Activated CD4-positive, alpha-beta T cell treated with anti-CD3 and anti-CD28 coated beads for 36 hours (primary cell): ENCODE measurements at regions of chr3 and their contacts with region 1.

Region 1: GRCh38 chr3:71444028-71444860 is 139.3 kb downstream of the FOXP1 start:
- DNase-seq: peak; percentile 76
- ATAC-seq: peak; percentile 59
- H3K4me3 Mint-ChIP-seq: peak overlapping the region; percentile 57
- H3K27ac Mint-ChIP-seq: peak overlapping the region; percentile 96
- H3K4me1 Mint-ChIP-seq: peaks cover 97% of the 10 kb centered on the region
- H3K27me3 Mint-ChIP-seq: no peaks in the 10 kb centered on the region

Region 2: DNA sequence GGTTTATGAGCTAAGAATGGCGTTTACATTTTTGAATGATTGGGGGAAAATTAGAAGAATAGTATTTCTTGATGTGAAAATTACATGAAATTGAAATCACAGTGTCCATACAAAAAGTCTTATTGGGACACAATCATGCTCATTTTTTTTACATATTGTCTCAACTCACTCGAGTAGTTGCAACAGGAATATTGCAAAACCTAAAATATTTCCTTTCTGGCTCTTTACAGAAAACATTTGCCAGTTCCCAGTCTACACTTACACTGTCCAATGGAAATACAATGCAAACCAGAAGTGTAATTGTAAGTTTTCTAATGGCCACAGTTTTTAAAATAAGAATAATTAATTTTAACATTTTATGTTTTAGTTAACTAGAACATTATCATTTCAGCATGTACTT is 1306.9 kb before region 1 on chr3:
- CTCF ChIA-PET with region 1: no interaction called
- POLR2A ChIA-PET with region 1: no interaction called
- intact Hi-C with region 1: no loop called
- DNase-seq: no peak
- ATAC-seq: no peak
- H3K4me3 Mint-ChIP-seq: no peak overlapping the region
- H3K27ac Mint-ChIP-seq: no peak overlapping the region
- H3K4me1 Mint-ChIP-seq: no peaks in the 10 kb centered on the region
- H3K27me3 Mint-ChIP-seq: peaks cover 4% of the 10 kb centered on the region

Region 3: DNA sequence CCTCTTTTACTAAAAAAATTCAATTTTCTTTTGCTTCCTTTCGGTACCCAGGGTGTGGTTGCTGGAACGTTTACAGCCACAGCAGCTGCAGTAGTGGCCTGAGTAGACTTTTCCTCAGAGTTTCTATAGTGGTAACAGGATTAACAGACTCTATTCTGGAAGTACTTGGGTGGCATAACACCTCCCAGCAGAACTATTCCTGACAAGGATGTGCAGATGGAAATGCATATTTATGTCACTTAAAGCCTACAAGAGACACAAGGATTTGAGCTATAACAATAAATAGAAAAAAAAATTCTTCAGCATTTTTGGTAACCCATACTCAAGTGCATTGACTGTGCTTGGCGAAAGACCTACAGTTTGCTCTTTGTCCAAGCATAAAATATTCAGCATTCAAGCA is 1225.8 kb before region 1 on chr3:
- CTCF ChIA-PET with region 1: no interaction called
- POLR2A ChIA-PET with region 1: no interaction called
- intact Hi-C with region 1: no loop called
- DNase-seq: no peak
- ATAC-seq: no peak
- H3K4me3 Mint-ChIP-seq: no peak overlapping the region
- H3K27ac Mint-ChIP-seq: no peak overlapping the region
- H3K4me1 Mint-ChIP-seq: no peaks in the 10 kb centered on the region
- H3K27me3 Mint-ChIP-seq: peaks cover 2% of the 10 kb centered on the region

Region 4: GRCh38 chr3:71389911-71390573 is 54.2 kb before region 1 on chr3:
- CTCF ChIA-PET with region 1: interaction called, 3 read pairs
- POLR2A ChIA-PET with region 1: no interaction called
- intact Hi-C with region 1: loop called in 1 of 2 experiments (anchors 5 kb)
- DNase-seq: peak; percentile 52
- ATAC-seq: peak; percentile 18
- H3K4me3 Mint-ChIP-seq: peak overlapping the region; percentile 52
- H3K27ac Mint-ChIP-seq: peak overlapping the region; percentile 69
- H3K4me1 Mint-ChIP-seq: peaks cover 78% of the 10 kb centered on the region
- H3K27me3 Mint-ChIP-seq: no peaks in the 10 kb centered on the region

Region 5: DNA sequence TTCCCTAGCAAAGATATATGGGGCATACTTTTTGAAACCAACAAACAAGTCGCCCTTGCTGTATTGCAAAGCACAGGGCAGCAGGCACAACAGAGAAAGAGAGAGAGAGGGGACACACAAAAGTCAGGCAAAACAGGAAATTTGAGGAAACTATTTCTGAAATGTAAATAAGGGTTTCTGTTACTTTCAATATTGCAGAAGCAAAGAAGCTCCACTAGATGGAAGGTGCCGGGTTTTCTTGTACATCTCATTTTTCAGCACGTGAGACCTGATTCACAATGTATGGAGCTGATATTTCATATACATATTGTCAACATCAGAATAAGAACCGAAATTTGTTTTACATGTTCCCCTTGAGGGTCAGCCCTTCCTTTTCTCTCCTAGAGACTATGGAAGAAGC is 11.9 kb after region 1 on chr3:
- CTCF ChIA-PET with region 1: interaction called, 12 read pairs
- POLR2A ChIA-PET with region 1: interaction called, 5 read pairs
- intact Hi-C with region 1: loop called in 1 of 2 experiments (anchors 1 kb)
- DNase-seq: no peak
- ATAC-seq: peak; percentile 10
- H3K4me3 Mint-ChIP-seq: peak overlapping the region; percentile 62
- H3K27ac Mint-ChIP-seq: peak overlapping the region; percentile 92
- H3K4me1 Mint-ChIP-seq: peaks cover 91% of the 10 kb centered on the region
- H3K27me3 Mint-ChIP-seq: no peaks in the 10 kb centered on the region

Region 6: GRCh38 chr3:71461749-71462465 is 17.7 kb after region 1 on chr3:
- CTCF ChIA-PET with region 1: interaction called, 12 read pairs
- POLR2A ChIA-PET with region 1: interaction called, 5 read pairs
- intact Hi-C with region 1: loop called in 1 of 2 experiments (anchors 1 kb)
- DNase-seq: no peak
- ATAC-seq: no peak
- H3K4me3 Mint-ChIP-seq: no peak overlapping the region
- H3K27ac Mint-ChIP-seq: peak overlapping the region; percentile 94
- H3K4me1 Mint-ChIP-seq: peaks cover 82% of the 10 kb centered on the region
- H3K27me3 Mint-ChIP-seq: no peaks in the 10 kb centered on the region

Region 7: GRCh38 chr3:71478568-71478967 is 34.3 kb after region 1 on chr3:
- CTCF ChIA-PET with region 1: no interaction called
- POLR2A ChIA-PET with region 1: interaction called, 4 read pairs
- intact Hi-C with region 1: loop called in 1 of 2 experiments (anchors 2 kb)
- DNase-seq: peak; percentile 89
- ATAC-seq: peak; percentile 98
- H3K4me3 Mint-ChIP-seq: peak overlapping the region; percentile 19
- H3K27ac Mint-ChIP-seq: peak overlapping the region; percentile 93
- H3K4me1 Mint-ChIP-seq: peaks cover 78% of the 10 kb centered on the region
- H3K27me3 Mint-ChIP-seq: no peaks in the 10 kb centered on the region